ENCODE measurements at regions of chr17 and their contacts with region 1.

Region 1: DNA sequence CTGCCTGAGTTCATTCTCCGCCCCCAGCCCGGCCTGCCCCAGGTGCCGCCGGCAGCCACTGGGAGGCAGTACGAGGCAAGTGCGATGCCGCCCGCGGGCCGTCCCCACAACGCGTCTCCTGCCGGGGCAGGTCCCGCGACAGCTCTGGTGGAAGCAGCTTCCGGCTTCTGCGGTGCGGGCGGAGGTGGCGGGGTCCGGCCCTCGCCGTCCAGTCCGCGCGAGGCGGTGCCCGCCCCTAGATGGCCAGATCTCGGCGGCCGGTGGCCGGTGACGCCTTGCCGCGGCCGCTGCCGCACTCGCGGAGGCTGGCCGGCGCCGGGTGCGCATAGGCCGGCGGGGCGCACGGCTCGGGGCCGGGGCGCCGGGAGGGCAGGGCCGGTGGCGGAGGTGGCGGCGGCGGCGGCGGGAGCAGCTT is 1.8 kb downstream of the GJD3 start:
- DNase-seq: peak in 5 of 6 donors; percentile 66 to 93 (median 79)
- ATAC-seq: peak; percentile 68 to 86 (median 76)
- H3K4me3 ChIP-seq: peak overlapping the region; percentile 46 to 65 (median 49)
- H3K27ac ChIP-seq: no peak overlapping the region
- H3K4me1 ChIP-seq: peaks cover 0 to 7% (median 0%) of the 10 kb centered on the region in 3 donors
- H3K27me3 ChIP-seq: no peaks in the 10 kb centered on the region
- CTCF ChIP-seq: peak; percentile 7 to 46 (median 26)

Region 2: DNA sequence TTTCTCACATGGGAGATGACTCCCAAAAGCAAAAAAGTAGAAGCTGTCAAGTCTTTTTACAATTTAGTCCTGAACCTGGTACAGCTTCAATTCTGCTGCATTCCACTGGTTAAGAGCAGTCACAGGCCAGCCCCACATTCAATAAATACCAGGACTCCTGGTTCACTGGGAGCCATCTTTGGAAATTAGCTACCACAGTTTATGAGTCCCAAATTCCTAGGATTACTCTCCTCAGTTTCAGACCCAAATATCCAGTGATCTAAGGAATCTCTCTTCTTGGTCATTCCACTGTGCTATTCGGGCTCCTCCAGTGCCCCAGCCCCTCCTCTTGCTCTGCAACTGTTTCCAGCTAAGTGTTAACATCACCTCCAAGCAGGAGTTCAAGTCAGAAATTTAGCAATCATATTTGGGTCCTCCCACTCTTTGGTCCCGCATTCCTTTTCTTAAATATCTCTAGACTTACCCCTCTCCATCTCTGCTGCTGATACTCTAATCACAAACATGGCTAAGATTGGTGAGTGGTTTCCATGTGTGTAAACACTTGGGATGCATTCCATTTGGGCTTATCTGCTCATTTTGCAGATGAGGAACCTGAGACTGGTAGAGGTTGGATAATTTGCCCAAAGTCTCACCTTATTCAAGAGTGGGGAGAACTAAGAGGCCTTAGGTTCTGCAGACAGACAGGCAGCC is 153.2 kb before region 1 on chr17:
- intact Hi-C with region 1: no loop called
- DNase-seq: peak in 1 of 6 donors; percentile 1
- ATAC-seq: no peak
- H3K4me3 ChIP-seq: no peak overlapping the region
- H3K27ac ChIP-seq: no peak overlapping the region
- H3K4me1 ChIP-seq: no peaks in the 10 kb centered on the region
- H3K27me3 ChIP-seq: no peaks in the 10 kb centered on the region
- CTCF ChIP-seq: no peak

Region 3: GRCh38 chr17:40417609-40418427 is 55.1 kb after region 1 on chr17 and contains the start of gene TOP2A:
- intact Hi-C with region 1: loop called in 1 of 3 experiments (anchors 10 kb)
- DNase-seq: peak; percentile 84 to 99 (median 95)
- ATAC-seq: peak; percentile 99
- H3K4me3 ChIP-seq: peak within 1 kb of the TSS; percentile 27 to 54 (median 39)
- H3K27ac ChIP-seq: peak within 1 kb of the TSS in 2 of 4 donors; percentile 13 to 33
- H3K4me1 ChIP-seq: peaks cover 0 to 11% (median 0%) of the 10 kb centered on the region in 3 donors
- H3K27me3 ChIP-seq: no peaks in the 10 kb centered on the region
- CTCF ChIP-seq: no peak
- total RNA-seq, gene TOP2A: 0.19 to 4.4 (median 1.2) TPM

Region 4: GRCh38 chr17:40559954-40560591 is 197.4 kb after region 1 on chr17:
- intact Hi-C with region 1: loop called in 1 of 3 experiments (anchors 10 kb)
- DNase-seq: peak; percentile 82 to 95 (median 92)
- ATAC-seq: peak; percentile 95 to 99 (median 96)
- H3K4me3 ChIP-seq: peak overlapping the region in 1 of 4 donors; percentile 23
- H3K27ac ChIP-seq: peak overlapping the region; percentile 39 to 69 (median 46)
- H3K4me1 ChIP-seq: peaks cover 0 to 3% (median 0%) of the 10 kb centered on the region in 3 donors
- H3K27me3 ChIP-seq: no peaks in the 10 kb centered on the region
- CTCF ChIP-seq: peak; percentile 93 to 97 (median 95)

Measured in pancreas (tissue), 10 donors.